GM10248 (cell line): ENCODE measurements at regions of chr5 and their contacts with region 1.

Region 1: GRCh38 chr5:171913987-171914273 is 92.5 kb downstream of the FBXW11 start:
- DNase-seq: no peak
- CTCF ChIP-seq: no peak

Region 2: DNA sequence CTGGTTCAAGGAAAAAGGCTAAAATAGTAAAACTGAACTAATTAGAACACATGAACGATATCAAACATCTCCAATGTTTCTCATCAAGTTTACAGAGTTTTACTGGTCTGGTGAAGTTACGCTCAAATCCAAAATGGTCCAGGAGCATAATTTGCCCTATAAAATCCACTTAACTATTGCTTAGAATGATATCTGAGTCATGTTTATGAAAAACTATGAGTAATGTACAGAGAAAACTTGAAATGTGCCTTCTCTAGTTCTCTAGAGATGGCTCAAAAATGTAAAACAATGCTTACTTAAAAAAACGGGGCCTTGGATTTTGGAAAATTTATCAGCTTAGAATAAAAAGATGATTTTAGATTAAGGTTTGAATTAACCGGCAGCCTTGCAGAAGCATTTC is 15.5 kb before region 1 on chr5:
- CTCF ChIA-PET with region 1: interaction called, 26 read pairs
- POLR2A ChIA-PET with region 1: no interaction called
- DNase-seq: no peak
- CTCF ChIP-seq: no peak

Region 3: DNA sequence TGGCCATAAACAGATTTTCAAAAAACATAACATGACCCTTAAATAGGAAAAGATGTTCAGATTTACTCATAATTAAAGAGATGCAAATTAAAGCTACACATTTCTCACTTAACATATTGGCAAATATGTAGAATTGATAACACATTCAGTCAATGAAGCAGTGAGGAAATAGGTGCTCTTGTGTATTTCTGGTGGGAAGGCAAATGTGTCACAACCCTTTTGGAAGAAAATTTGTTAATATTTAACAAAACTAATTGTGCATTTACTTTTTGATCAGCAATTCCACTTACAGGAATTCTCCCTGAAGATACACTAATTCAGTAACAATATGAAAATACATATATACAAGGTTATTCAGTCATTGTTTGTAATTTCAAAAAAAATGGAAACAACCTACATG is 24.4 kb after region 1 on chr5:
- CTCF ChIA-PET with region 1: interaction called, 14 read pairs
- POLR2A ChIA-PET with region 1: no interaction called
- DNase-seq: no peak
- CTCF ChIP-seq: no peak

Region 4: GRCh38 chr5:171984748-171985419 is 71.0 kb after region 1 on chr5:
- CTCF ChIA-PET with region 1: interaction called, 27 read pairs
- POLR2A ChIA-PET with region 1: no interaction called
- DNase-seq: no peak
- CTCF ChIP-seq: no peak

Region 5: DNA sequence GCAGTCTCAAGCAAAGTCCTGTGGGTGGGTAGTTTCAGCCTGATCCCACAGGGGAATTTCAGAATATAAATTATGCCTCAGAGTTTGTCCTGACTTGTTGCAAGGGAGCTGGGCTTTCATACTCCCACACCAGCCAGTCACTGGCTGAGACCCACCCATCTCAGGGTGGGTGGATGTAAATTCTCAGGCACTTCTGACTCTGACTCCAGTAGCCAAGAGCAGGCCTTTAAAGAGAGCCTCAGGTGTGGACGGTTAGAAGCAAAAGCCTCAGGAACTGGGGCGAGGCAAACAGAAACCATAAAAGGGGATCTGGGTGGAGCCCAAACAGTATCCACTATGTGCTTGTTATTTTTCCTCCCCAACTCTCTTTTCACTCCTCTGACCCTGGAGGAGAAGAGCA is 121.1 kb after region 1 on chr5:
- CTCF ChIA-PET with region 1: interaction called, 80 read pairs
- POLR2A ChIA-PET with region 1: no interaction called
- DNase-seq: peak; percentile 74
- CTCF ChIP-seq: no peak

Region 6: GRCh38 chr5:172059661-172060100 is 145.8 kb after region 1 on chr5:
- CTCF ChIA-PET with region 1: interaction called, 54 read pairs
- POLR2A ChIA-PET with region 1: no interaction called
- DNase-seq: no peak
- CTCF ChIP-seq: peak; percentile 49

Region 7: GRCh38 chr5:172293054-172293744 is 379.3 kb after region 1 on chr5:
- CTCF ChIA-PET with region 1: interaction called, 18 read pairs
- POLR2A ChIA-PET with region 1: no interaction called
- DNase-seq: peak; percentile 69
- CTCF ChIP-seq: peak; percentile 89